Right cardiac atrium (tissue), 5 donors: ENCODE measurements at regions of chr16 and their contacts with region 1.

Region 1: DNA sequence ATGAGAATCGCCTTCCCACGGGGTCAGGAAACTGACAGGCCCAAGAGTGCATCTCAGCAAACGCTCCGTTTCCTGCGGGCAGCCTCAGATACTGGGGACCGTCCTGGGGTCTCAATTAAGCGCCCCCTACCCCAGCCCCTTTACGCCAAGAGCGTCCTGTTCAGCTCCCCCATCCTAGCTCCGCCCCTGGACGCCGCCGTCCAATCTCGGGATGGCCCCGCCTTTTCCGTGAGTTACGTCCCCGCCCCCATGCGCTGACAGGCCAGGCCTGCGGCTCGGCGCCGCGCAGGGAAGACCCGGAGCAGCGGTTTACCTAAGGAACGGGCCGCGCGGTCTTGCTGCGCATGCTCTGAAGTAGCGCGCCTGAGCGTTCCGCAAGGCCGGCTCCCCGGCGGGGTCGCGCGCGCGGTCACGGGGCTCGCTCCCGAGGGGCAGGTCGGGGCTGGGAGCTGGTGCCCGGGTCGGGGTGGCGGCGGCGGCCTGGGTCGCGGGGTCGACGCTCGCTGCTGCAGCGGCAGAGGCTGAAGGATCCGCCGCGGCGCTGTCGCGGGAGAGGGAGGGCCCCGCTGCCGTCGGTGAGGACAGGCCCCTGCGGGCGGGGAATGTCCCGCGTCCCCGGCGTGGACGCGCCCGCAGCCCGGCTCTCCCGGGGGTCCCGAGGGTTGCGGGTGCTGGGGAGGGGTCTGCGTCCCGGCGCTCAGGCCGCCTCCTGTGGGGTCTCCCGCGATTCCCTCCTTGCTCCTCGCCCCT is at the start of gene FLYWCH1:
- DNase-seq: peak; percentile 99 to 100 (median 100)
- ATAC-seq: peak; percentile 97 to 98
- H3K4me3 ChIP-seq: peak within 1 kb of the TSS; percentile 87
- H3K27ac ChIP-seq: peak within 1 kb of the TSS; percentile 93
- H3K4me1 ChIP-seq: peaks cover 5% of the 10 kb centered on the region
- H3K27me3 ChIP-seq: no peaks in the 10 kb centered on the region
- total RNA-seq, gene FLYWCH1: 35.8 to 43.9 (median 36.4) TPM

Region 2: GRCh38 chr16:2867987-2868789 is 43.6 kb before region 1 on chr16:
- intact Hi-C with region 1: loop called in 3 of 4 experiments (anchors 5 kb)
- DNase-seq: peak; percentile 94 to 99 (median 98)
- ATAC-seq: peak; percentile 98
- H3K4me3 ChIP-seq: peak overlapping the region; percentile 76
- H3K27ac ChIP-seq: peak overlapping the region; percentile 97
- H3K4me1 ChIP-seq: no peaks in the 10 kb centered on the region
- H3K27me3 ChIP-seq: no peaks in the 10 kb centered on the region

Region 3: DNA sequence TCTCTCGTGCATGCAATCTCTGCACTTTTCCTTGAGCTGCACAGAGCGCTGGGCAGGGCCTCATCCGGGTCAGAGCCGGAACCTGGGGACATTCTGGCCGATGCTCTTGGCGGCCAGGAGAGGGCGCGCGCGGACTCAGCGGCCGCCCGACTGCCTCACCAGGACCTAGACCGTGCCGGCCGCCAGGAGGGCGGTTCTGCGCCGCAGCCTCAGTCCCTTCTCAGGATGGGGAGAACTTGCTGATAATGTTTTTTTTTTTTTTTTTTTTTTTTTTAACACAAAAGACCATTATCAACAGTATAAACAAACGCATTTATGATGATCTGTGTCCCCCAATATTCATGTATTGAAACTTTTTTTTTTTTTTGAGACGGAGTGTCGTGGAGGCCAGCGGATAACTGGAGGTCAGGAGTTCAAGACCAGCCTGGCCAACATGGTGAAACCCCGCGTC is 36.8 kb before region 1 on chr16:
- intact Hi-C with region 1: loop called in 1 of 4 experiments (anchors 5 kb)
- DNase-seq: peak; percentile 86 to 94 (median 93)
- ATAC-seq: peak; percentile 98
- H3K4me3 ChIP-seq: no peak overlapping the region
- H3K27ac ChIP-seq: no peak overlapping the region
- H3K4me1 ChIP-seq: no peaks in the 10 kb centered on the region
- H3K27me3 ChIP-seq: no peaks in the 10 kb centered on the region

Region 4: DNA sequence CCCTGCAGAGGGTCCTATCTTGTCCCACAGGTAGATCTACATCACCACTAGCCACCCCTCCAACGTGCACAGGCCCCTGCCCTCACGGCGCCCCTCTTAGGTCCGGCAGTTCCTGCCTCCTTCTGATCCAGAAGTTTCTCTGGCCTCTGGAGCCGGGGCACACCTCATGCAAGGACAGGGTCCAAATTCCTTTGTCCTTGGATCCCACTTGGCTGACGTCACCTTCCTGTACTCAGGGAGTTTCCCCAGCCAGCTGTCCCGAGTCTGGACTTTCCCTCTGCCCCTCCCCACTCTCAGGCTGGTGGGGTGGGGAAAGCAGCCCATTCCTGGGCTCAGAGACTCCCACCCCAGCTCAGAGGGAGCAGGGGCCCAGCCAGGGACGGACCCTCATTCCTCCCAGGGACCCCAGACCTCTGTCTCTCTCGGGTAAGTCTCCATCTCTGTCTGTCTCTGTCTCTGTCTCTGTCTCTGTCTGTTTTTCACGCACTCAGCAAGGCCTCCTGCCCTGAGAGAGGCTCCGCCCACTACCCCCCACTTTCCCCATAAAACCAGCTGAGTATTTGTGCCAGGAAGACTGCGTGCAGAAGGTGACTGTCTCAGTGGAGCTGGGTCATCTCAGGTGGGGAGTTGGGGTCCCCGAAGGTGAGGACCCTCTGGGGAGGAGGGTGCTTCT is 153.4 kb after region 1 on chr16 and contains the start of gene IL32:
- intact Hi-C with region 1: no loop called
- DNase-seq: peak; percentile 77 to 85 (median 80)
- ATAC-seq: peak; percentile 81 to 85
- H3K4me3 ChIP-seq: peak within 1 kb of the TSS; percentile 48
- H3K27ac ChIP-seq: peak within 1 kb of the TSS; percentile 78
- H3K4me1 ChIP-seq: no peaks in the 10 kb centered on the region
- H3K27me3 ChIP-seq: no peaks in the 10 kb centered on the region
- total RNA-seq, gene IL32: 27.5 to 55.0 (median 37.8) TPM